ENCODE measurements at regions of chr6 and their contacts with region 1.

Region 1: DNA sequence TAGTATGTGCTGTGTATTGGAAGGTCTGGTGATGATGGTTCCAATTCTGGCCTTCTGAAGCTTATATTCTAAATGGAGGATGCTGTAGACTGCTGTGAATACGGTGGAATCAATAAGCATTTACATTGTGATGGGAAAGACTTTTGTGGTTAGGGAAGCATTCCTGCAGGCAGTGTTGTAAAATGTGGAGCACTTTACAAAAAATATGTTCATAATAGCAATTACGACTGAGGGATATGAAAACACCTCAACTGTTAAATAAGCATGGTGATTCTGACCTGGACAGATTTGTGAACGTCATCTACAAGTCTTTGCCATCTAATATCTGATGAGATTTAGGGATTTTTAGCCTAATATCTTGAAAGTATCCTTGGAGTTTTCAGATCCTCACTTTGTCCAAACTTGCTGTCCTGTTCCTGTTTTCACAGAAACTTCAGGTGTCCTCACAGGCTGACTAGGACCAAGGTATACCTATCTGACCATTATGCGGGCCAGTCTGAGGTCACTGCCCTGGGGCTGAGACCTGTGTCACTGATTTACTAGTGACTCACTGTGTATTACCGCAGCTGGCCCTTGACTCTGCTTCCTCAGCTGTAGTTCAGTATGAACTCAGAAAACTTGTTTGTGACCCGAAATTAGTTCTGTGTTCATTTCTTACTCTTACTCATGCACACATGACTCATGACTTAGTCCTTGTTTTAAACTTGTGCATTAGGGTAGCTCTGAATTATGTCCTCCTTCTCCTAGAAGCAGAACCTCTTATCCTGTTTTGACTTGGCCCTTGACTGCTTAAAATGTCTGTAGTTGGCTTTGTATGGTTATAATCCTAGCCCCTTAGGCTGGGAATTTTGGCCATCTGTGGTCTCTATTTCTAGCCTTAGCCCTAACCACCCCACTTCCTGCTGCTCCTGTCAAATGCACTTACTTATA is 343.0 kb downstream of the CDKAL1 start:
- DNase-seq: peak; percentile 95
- H3K4me3 Mint-ChIP-seq: peak overlapping the region; percentile 45
- H3K27ac Mint-ChIP-seq: peak overlapping the region; percentile 96
- H3K4me1 Mint-ChIP-seq: peaks cover 93% of the 10 kb centered on the region
- H3K27me3 Mint-ChIP-seq: no peaks in the 10 kb centered on the region
- CTCF ChIP-seq: no peak

Region 2: DNA sequence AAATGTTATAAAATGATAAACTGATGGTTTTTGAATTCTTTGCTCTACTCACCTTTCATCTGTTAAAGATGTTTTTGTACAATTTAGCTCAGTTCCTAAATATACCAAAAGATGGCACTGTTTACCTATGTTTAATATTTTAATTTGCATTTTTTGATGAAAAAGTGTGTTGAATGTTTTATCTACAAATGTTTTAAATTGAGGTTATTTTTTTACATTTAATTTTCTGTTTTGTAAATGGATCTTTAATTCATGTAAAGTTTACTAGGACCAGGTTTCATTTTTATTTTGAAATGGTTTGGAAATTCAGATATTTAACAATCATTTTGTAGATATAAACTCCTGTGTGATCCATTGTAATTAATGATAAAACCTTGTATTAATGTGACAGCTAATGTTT is 313.0 kb before region 1 on chr6:
- CTCF ChIA-PET with region 1: interaction called, 8 read pairs
- intact Hi-C with region 1: loop called (anchors 2 kb)
- DNase-seq: no peak
- H3K4me3 Mint-ChIP-seq: no peak overlapping the region
- H3K27ac Mint-ChIP-seq: no peak overlapping the region
- H3K4me1 Mint-ChIP-seq: peaks cover 9% of the 10 kb centered on the region
- H3K27me3 Mint-ChIP-seq: no peaks in the 10 kb centered on the region
- CTCF ChIP-seq: peak; percentile 69

Region 3: DNA sequence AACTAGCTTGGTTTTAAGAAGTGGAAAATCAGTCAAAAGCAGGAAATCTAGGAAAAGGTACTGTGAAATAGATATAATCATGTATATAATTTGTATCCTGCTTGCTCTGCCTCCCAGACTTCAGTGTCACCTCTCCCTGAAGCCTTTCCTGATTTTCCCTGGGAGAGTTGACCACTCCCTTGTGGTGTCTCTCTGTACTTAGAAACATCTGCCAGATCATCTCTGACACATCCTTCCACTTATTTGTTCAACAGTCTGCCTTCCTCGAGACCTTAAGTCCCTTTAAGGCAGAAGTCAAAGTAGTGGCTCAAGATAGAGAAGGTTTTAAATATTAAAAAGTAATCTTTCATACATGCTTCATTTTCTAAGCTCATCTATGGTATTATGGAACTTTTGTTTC is 106.5 kb before region 1 on chr6:
- CTCF ChIA-PET with region 1: no interaction called
- intact Hi-C with region 1: no loop called
- DNase-seq: no peak
- H3K4me3 Mint-ChIP-seq: no peak overlapping the region
- H3K27ac Mint-ChIP-seq: no peak overlapping the region
- H3K4me1 Mint-ChIP-seq: no peaks in the 10 kb centered on the region
- H3K27me3 Mint-ChIP-seq: no peaks in the 10 kb centered on the region
- CTCF ChIP-seq: no peak

Region 4: DNA sequence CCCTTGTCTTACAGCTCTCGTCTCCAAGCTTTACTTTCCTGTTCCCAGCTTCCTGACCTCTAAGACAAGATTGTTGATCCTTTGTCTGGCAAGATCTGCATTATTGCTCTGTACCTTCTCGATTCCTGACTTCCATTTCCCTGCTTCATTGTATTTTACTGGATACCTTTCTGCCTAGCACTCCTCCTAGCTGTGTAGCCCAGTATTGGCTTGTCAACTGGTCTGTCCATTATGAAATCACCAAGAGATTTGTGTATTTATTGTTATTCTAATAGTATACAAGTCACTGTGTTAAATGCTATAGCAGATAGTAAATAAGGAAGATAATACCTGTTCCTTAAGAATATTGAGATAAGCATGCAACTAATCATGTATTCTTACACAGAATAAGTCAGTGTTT is 37.6 kb before region 1 on chr6:
- CTCF ChIA-PET with region 1: no interaction called
- intact Hi-C with region 1: no loop called
- DNase-seq: no peak
- H3K4me3 Mint-ChIP-seq: no peak overlapping the region
- H3K27ac Mint-ChIP-seq: no peak overlapping the region
- H3K4me1 Mint-ChIP-seq: peaks cover 10% of the 10 kb centered on the region
- H3K27me3 Mint-ChIP-seq: no peaks in the 10 kb centered on the region
- CTCF ChIP-seq: no peak

Region 5: GRCh38 chr6:21022343-21023107 is 145.3 kb after region 1 on chr6:
- CTCF ChIA-PET with region 1: interaction called, 17 read pairs
- intact Hi-C with region 1: loop called (anchors 1 kb)
- DNase-seq: peak; percentile 91
- H3K4me3 Mint-ChIP-seq: peak overlapping the region; percentile 53
- H3K27ac Mint-ChIP-seq: peak overlapping the region; percentile 97
- H3K4me1 Mint-ChIP-seq: peaks cover 65% of the 10 kb centered on the region
- H3K27me3 Mint-ChIP-seq: no peaks in the 10 kb centered on the region
- CTCF ChIP-seq: no peak

Region 6: GRCh38 chr6:21220271-21220987 is 343.2 kb after region 1 on chr6:
- CTCF ChIA-PET with region 1: no interaction called
- intact Hi-C with region 1: loop called (anchors 2 kb)
- DNase-seq: peak; percentile 61
- H3K4me3 Mint-ChIP-seq: peak overlapping the region; percentile 15
- H3K27ac Mint-ChIP-seq: peak overlapping the region; percentile 53
- H3K4me1 Mint-ChIP-seq: peaks cover 24% of the 10 kb centered on the region
- H3K27me3 Mint-ChIP-seq: no peaks in the 10 kb centered on the region
- CTCF ChIP-seq: no peak

Region 7: DNA sequence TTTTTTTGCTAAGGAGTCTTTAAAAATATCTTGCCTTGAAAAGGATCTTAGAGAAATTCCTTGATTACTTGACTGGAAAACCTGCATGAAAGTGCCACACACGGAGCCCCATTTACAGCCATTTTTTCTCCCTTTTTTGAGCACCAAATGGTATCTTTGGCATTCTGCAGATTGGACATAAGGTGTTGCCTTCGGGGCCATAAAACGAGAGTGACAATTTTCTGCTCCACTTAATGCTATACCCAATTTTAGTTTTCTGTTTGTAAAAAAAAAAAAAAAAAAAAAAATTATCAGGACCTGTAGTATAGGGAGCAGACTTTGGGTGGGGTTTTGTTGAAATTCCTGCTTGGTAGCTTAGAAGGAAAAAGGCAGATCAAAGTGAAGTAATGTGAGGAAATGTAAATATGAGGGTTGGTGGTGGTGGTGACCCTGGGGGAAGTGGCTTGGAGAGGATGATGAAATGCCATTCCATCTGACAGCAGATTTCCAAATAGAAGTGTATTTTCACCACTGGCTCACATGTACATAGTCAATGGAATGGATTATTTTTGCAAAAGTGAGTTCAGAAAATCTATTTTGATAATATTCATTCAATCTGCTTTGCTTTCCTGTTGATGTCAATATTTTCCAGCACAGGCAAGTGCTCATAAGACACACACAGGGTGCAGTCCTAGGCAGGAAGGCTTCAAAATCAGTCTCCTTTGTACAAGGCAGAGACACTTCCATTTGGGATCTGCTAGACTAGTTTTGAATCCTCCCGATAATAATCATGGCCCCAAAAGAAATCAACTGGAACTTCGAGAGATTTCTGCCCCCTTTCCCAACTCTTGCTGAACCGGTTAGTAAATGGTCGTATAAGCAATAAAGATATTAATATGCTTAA is 504.3 kb after region 1 on chr6:
- CTCF ChIA-PET with region 1: interaction called, 5 read pairs
- intact Hi-C with region 1: loop called (anchors 10 kb)
- DNase-seq: peak; percentile 74
- H3K4me3 Mint-ChIP-seq: no peak overlapping the region
- H3K27ac Mint-ChIP-seq: peak overlapping the region; percentile 81
- H3K4me1 Mint-ChIP-seq: peaks cover 30% of the 10 kb centered on the region
- H3K27me3 Mint-ChIP-seq: no peaks in the 10 kb centered on the region
- CTCF ChIP-seq: no peak

Region 8: GRCh38 chr6:21931641-21932335 is 1054.5 kb after region 1 on chr6:
- CTCF ChIA-PET with region 1: no interaction called
- intact Hi-C with region 1: loop called (anchors 5 kb)
- DNase-seq: no peak
- H3K4me3 Mint-ChIP-seq: no peak overlapping the region
- H3K27ac Mint-ChIP-seq: no peak overlapping the region
- H3K4me1 Mint-ChIP-seq: peaks cover 42% of the 10 kb centered on the region
- H3K27me3 Mint-ChIP-seq: no peaks in the 10 kb centered on the region
- CTCF ChIP-seq: no peak

Measured in Calu3 (cell line).